HepG2 (cell line): ENCODE measurements at regions of chr1 and their contacts with region 1.

Region 1: DNA sequence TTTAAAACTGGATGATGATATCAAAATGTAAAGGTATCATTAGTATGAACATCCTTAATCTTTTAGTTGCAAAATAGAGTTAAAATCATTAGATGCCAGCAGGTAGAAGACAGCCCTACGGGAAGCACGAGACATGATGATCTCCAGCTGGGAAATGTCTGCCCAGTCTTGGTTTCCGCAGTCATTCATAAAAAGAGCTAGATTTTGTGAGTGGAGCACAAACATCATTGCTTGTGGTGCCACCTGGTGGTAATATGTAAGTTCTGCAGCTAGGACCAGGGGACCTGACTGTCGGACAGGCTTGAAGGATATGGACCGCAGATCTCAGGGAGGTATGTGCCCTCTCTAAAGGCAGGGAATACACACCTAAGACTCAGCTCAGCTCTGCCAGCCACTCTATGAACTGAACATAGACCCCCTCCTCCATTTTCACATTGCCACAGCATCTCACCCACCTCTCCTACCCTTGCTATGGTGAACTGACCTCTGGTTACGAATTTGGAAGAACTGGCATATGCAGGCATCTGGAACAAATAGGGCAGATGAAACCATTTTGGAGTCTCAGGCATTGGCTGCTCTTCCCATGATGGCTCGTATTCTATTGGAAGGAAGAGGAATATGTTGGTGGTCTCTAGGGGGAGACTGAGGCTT is 9.2 kb downstream of the FCMR start:
- DNase-seq: peak; percentile 61
- ATAC-seq: peak; percentile 75
- H3K4me3 ChIP-seq: no peak overlapping the region
- H3K27ac ChIP-seq: no peak overlapping the region
- H3K4me1 ChIP-seq: no peaks in the 10 kb centered on the region
- H3K27me3 ChIP-seq: peaks cover 2 to 52% of the 10 kb centered on the region in 2 experiments
- CTCF ChIP-seq: peak; percentile 82
- EP300 ChIP-seq: no peak
- POLR2A ChIP-seq: no peak
- RAD21 ChIP-seq: peak; percentile 62; the same call in 1 of the 2 replicates

Region 2: GRCh38 chr1:206635080-206635977 is 277.2 kb before region 1 on chr1 and contains the start of gene DYRK3:
- CTCF ChIA-PET with region 1: interaction called, 5 read pairs
- POLR2A ChIA-PET with region 1: no interaction called
- in situ Hi-C with region 1: loop called (anchors 25 kb)
- intact Hi-C with region 1: loop called (anchors 1 kb)
- DNase-seq: peak; percentile 76
- ATAC-seq: peak; percentile 96
- H3K4me3 ChIP-seq: peak within 1 kb of the TSS; percentile 68 to 83 (median 81)
- H3K27ac ChIP-seq: no peak within 1 kb of the TSS
- H3K4me1 ChIP-seq: peaks cover 26% of the 10 kb centered on the region
- H3K27me3 ChIP-seq: peaks cover 0 to 3% of the 10 kb centered on the region in 2 experiments; a peak in 2 of 5 replicates
- CTCF ChIP-seq: peak; percentile 25; the same call in 1 of the 2 replicates
- EP300 ChIP-seq: no peak
- POLR2A ChIP-seq: peak; percentile 74 to 91
- RAD21 ChIP-seq: no peak
- total RNA-seq, gene DYRK3: 2.8 and 4.1 TPM in 2 replicates

Region 3: DNA sequence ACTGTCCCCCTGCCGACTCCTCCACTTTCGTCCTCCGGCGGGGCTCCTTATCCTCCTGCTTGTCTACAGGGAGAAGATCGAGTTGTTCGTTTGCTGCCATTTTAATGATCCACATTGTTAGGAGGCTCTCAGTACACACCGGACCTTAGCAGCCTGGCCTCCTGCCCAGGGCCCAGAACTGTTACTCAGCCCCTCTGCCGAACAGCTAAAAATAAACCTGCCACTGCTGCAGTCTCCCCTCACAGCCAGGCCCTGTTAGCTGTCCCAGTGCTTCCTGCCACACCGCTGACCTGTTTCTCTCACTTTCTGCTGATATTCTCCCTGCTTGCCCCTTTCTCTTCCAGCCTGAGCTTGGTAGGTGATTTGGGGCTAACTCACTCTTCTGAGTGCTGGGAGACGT is 219.5 kb before region 1 on chr1:
- CTCF ChIA-PET with region 1: no interaction called
- POLR2A ChIA-PET with region 1: no interaction called
- in situ Hi-C with region 1: no loop called
- intact Hi-C with region 1: no loop called
- DNase-seq: no peak
- ATAC-seq: no peak
- H3K4me3 ChIP-seq: no peak overlapping the region
- H3K27ac ChIP-seq: no peak overlapping the region
- H3K4me1 ChIP-seq: peaks cover 90% of the 10 kb centered on the region
- H3K27me3 ChIP-seq: no peaks in the 10 kb centered on the region
- CTCF ChIP-seq: no peak
- EP300 ChIP-seq: no peak
- POLR2A ChIP-seq: no peak
- RAD21 ChIP-seq: no peak

Region 4: DNA sequence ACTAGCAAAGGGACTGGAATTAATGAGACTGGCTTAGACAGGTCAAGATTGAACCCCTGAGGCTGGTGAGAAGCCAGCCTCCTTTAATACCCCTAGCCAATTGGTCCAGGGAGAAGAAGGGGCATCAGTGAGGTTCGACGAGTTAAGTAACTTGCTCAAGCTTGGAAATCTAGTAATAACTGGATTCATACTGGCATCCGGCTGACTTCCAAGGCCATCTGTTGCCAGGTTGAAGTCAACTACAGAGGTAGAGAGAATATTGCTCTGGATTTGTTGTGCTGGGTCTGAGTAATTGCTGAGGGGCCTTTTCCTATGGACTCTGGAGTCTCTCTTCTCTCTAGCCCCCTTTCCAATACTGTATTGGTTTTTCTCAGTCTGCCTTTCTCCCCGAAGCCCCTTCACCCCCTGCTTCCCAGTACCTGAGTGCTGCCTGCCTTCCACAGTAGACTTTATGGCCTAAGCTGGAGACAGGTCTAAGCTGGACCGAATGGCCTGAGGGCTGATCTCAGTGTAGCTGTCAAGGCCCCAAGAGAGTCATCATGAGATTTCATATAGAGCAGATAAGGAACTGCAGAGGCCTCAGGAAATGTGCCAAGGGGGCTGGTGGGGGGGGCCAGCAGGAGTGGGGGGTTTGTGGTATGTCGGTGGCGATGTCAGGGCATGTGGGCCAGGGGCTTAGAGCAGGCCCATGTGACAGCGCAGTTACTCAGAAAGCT is 184.4 kb before region 1 on chr1:
- CTCF ChIA-PET with region 1: interaction called, 5 read pairs
- POLR2A ChIA-PET with region 1: no interaction called
- in situ Hi-C with region 1: no loop called
- intact Hi-C with region 1: loop called (anchors 2 kb)
- DNase-seq: no peak
- ATAC-seq: no peak
- H3K4me3 ChIP-seq: no peak overlapping the region
- H3K27ac ChIP-seq: no peak overlapping the region
- H3K4me1 ChIP-seq: peaks cover 9% of the 10 kb centered on the region
- H3K27me3 ChIP-seq: no peaks in the 10 kb centered on the region
- CTCF ChIP-seq: no peak
- EP300 ChIP-seq: no peak
- POLR2A ChIP-seq: no peak
- RAD21 ChIP-seq: no peak

Region 5: DNA sequence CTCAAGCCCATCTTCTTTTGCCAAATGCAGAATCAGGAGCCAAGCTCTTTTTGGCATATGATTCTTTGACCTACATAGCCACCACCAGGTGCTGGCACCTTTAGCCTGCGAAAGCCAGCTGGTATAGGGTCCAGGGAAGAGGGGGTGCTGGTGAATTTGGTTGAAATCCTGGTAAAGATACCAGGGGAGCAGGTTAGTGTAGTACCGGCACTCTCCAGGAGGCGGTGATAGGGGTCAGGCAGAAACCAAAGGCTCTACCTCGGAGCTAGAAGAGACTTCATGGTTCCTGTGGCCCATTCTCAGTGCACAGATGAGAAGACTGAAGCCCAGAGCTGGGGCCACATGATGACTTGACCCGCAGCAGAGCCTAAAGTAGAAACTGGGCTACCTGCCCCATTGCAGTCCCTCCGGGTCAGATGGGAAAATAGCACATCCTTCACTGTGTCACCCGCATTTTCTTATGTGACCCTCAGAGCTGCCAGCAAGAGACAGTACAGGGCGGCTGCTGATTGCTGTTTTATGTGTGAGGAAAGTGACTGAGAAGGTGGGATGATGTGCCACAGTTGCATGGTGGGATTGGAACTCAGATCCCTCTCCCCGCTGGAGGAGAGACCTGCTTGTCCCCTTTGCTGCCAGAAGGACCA is 177.9 kb before region 1 on chr1:
- CTCF ChIA-PET with region 1: interaction called, 11 read pairs
- POLR2A ChIA-PET with region 1: no interaction called
- in situ Hi-C with region 1: loop called (anchors 5 kb)
- intact Hi-C with region 1: loop called (anchors 2 kb)
- DNase-seq: no peak
- ATAC-seq: peak; percentile 66
- H3K4me3 ChIP-seq: no peak overlapping the region
- H3K27ac ChIP-seq: no peak overlapping the region
- H3K4me1 ChIP-seq: no peaks in the 10 kb centered on the region
- H3K27me3 ChIP-seq: no peaks in the 10 kb centered on the region
- CTCF ChIP-seq: peak; percentile 70
- EP300 ChIP-seq: no peak
- POLR2A ChIP-seq: no peak
- RAD21 ChIP-seq: peak; percentile 41; the same call in 1 of the 2 replicates

Region 6: DNA sequence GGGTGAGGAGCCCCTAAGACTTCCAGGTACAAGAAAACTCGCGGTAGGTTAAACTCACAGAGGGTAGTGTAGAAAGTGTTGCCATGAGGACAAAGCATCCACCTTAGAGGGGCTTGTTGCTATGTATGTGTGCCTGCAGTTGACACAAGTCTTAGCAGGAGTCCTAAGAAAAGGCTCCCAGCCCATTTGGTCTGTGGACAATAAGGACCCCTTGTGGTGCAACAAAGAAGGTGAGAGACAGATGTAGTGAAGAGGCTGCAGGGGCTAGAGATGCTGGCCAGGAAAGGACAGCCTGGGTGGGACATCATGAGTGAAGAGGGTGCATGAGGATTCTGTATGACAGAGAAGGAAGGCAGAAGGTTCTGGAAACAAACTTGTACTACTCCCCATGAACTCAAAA is 104.0 kb before region 1 on chr1:
- CTCF ChIA-PET with region 1: interaction called, 3 read pairs
- POLR2A ChIA-PET with region 1: no interaction called
- in situ Hi-C with region 1: no loop called
- intact Hi-C with region 1: loop called (anchors 5 kb)
- DNase-seq: peak; percentile 6
- ATAC-seq: peak; percentile 52; the same call in 2 of the 3 replicates
- H3K4me3 ChIP-seq: no peak overlapping the region
- H3K27ac ChIP-seq: no peak overlapping the region
- H3K4me1 ChIP-seq: no peaks in the 10 kb centered on the region
- H3K27me3 ChIP-seq: 0 out of 5 replicates have a peak, but pooled peaks cover 2 to 4% of the 10 kb centered on the region in 2 experiments
- CTCF ChIP-seq: peak; percentile 51
- EP300 ChIP-seq: no peak
- POLR2A ChIP-seq: no peak
- RAD21 ChIP-seq: no peak

Region 7: GRCh38 chr1:206865013-206865671 is 47.4 kb before region 1 on chr1 and contains the start of gene IL20:
- CTCF ChIA-PET with region 1: interaction called, 3 read pairs
- POLR2A ChIA-PET with region 1: no interaction called
- in situ Hi-C with region 1: no loop called
- intact Hi-C with region 1: loop called (anchors 5 kb)
- DNase-seq: peak; percentile 36
- ATAC-seq: peak; percentile 77
- H3K4me3 ChIP-seq: no peak within 1 kb of the TSS
- H3K27ac ChIP-seq: no peak within 1 kb of the TSS
- H3K4me1 ChIP-seq: no peaks in the 10 kb centered on the region
- H3K27me3 ChIP-seq: peaks cover 0 to 8% of the 10 kb centered on the region in 2 experiments; a peak in 2 of 5 replicates
- CTCF ChIP-seq: peak; percentile 75
- EP300 ChIP-seq: no peak
- POLR2A ChIP-seq: no peak
- RAD21 ChIP-seq: no peak
- total RNA-seq, gene IL20: not detected in 2 replicates

Region 8: GRCh38 chr1:207017615-207018559 is 105.3 kb after region 1 on chr1:
- CTCF ChIA-PET with region 1: no interaction called
- POLR2A ChIA-PET with region 1: no interaction called
- in situ Hi-C with region 1: no loop called
- intact Hi-C with region 1: no loop called
- DNase-seq: no peak
- ATAC-seq: no peak
- H3K4me3 ChIP-seq: no peak overlapping the region
- H3K27ac ChIP-seq: no peak overlapping the region
- H3K4me1 ChIP-seq: peaks cover 43% of the 10 kb centered on the region
- H3K27me3 ChIP-seq: no peaks in the 10 kb centered on the region
- CTCF ChIP-seq: no peak
- EP300 ChIP-seq: no peak
- POLR2A ChIP-seq: no peak
- RAD21 ChIP-seq: no peak